Activated T-helper 2 cell treated with anti-CD3 and anti-CD28 coated beads, Interferon-gamma antibody, Interleukin-2, Interleukin-4, amounts not matched to agents 10 μg/mL and 5 μg/mL and 100 μg/mL, durations not matched to agents 14 hours and 24 hours and 36 hours (primary cell): ENCODE measurements at regions of chr17 and their contacts with region 1.

Region 1: DNA sequence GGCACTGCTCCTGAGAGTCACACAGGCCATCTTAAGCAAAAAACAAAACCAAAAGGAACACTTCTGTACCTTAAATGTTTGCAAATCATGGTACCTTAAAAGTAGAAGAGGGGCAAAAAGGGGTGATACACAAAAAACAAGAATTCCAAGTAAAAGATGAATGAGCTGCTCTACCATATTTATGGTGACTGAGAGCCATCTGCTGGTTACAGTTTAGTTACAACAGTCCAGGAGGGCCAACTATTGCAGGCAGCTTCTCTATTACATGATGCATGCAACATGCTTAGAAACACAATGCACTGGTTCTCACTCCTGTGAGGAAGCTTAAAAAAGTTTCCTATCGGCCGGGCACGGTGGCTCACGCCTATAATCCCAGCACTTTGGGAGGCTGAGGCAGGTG is 53.5 kb downstream of the STX8 start:
- DNase-seq: no peak
- H3K4me3 Mint-ChIP-seq: no peak overlapping the region
- H3K27ac Mint-ChIP-seq: no peak overlapping the region
- H3K4me1 Mint-ChIP-seq: peaks cover 11% of the 10 kb centered on the region
- H3K27me3 Mint-ChIP-seq: no peaks in the 10 kb centered on the region

Region 2: DNA sequence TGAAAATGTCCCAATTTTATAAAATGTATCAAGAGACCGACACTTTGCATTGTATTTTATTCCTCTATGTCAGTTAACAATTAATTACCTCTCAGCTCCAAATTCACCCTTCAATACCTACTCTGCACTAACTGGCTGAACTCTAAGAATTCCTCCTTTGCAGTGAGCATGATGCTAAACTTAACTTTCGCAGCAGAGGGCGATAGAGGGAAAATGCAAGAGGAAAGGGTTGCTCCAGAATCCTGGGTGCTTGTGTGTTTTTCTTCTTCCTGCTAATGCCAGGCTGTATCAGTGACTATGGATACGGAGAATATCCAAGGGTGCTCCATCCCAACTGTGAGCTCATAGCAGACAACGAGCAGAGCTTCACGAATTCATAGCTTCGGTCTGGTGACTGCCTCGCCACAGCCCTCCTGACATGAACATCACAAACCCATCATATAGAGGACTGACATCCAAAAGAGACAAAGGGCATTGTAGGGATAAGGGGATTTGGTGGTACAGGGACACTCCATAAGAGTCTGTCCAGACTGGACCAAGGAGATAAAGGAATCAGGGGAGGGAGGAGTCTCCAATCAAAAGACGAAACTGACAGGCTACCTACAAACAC is 119.4 kb before region 1 on chr17:
- intact Hi-C with region 1: loop called (anchors 10 kb)
- DNase-seq: peak; percentile 12
- H3K4me3 Mint-ChIP-seq: no peak overlapping the region
- H3K27ac Mint-ChIP-seq: no peak overlapping the region
- H3K4me1 Mint-ChIP-seq: no peaks in the 10 kb centered on the region
- H3K27me3 Mint-ChIP-seq: no peaks in the 10 kb centered on the region